Ovary (tissue), 10 donors: ENCODE measurements at regions of chr7 and their contacts with region 1.

Region 1: GRCh38 chr7:154927624-154928143 is 75.2 kb downstream of the PAXIP1 start:
- DNase-seq: peak; percentile 59 to 86 (median 69)
- H3K4me3 ChIP-seq: peak overlapping the region; percentile 66
- H3K27ac ChIP-seq: peak overlapping the region; percentile 79 to 84
- H3K4me1 ChIP-seq: peaks cover 2% of the 10 kb centered on the region
- H3K27me3 ChIP-seq: no peaks in the 10 kb centered on the region
- CTCF ChIP-seq: peak; percentile 44 to 78 (median 61)
- EP300 ChIP-seq: no peak
- POLR2A ChIP-seq: no peak

Region 2: DNA sequence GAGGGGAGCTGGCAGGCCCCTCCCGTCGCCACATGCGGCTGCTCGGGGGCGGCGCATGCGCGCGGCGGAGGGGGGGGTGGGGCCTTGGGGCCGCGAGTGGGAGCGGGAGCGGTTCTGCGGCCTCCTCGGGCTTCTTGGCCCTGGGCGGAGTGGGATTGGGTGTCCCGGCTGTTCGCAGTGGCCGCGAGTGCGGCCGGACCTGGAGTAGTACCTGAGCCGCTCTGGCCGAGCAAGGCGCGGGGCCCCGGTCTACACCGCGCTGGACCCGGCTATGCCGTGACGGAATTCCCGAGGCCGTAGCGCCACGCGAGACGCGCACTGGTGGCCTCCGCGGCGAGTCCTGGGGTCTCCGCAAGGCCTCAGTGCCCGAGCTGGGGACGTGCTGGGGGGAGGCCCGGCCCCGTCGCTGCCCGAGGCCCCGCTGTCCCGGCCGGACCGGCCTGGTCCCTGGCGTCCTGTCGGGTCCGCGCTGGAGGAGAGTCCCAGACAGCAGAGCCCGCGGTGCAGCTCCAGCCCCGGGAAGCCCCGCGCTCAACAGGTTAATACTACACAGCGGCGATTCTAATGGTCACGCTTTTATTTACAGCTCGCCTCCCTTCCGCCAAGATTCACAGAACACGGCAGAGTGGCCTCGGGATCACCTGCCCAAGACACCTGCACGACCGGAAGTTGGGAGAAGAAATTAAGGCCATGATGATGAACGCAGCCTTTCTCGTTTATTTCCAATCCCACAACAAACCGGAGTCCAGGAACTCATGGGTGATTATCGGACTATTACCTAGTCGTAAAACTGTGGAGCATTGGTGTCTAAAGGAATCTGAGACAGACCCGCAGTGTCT is 75.9 kb after region 1 on chr7:
- intact Hi-C with region 1: loop called in 2 of 4 experiments (anchors 5 to 10 kb)
- DNase-seq: peak in 4 of 5 donors; percentile 76 to 91 (median 84)
- H3K4me3 ChIP-seq: peak overlapping the region; percentile 56
- H3K27ac ChIP-seq: peak overlapping the region; percentile 90 to 95
- H3K4me1 ChIP-seq: peaks cover 10% of the 10 kb centered on the region
- H3K27me3 ChIP-seq: no peaks in the 10 kb centered on the region
- CTCF ChIP-seq: no peak
- EP300 ChIP-seq: no peak
- POLR2A ChIP-seq: peak; percentile 65

Region 3: DNA sequence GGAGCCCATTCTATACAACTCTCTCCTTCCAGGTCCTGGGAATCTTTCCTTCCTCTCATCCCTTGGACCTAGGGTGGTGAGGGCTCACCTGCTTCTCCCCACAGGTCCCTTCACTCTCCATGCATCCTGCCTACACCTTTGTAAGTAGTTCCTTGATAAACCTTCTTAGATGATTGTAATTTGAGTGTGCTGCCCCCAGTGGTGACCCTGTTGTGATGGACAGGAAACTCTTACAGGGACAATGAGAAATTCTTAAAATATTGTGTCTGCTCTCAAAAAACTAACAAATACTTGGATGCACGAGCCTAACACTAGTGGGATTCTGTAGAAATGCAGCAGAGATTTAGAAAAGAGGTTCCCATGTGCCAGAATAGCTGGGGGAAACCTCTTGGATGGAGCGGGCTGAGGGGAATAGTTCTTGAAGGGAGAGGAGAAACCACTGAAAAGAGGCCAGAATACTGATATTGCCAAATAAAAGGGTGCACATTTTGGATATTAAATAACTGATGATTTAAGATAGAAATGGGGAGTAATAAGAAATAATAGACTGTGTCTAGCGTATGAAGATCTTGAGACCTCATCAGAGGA is 82.0 kb after region 1 on chr7:
- intact Hi-C with region 1: loop called in 2 of 4 experiments (anchors 5 to 10 kb)
- DNase-seq: no peak
- H3K4me3 ChIP-seq: no peak overlapping the region
- H3K27ac ChIP-seq: no peak overlapping the region
- H3K4me1 ChIP-seq: no peaks in the 10 kb centered on the region
- H3K27me3 ChIP-seq: no peaks in the 10 kb centered on the region
- CTCF ChIP-seq: no peak
- EP300 ChIP-seq: no peak
- POLR2A ChIP-seq: no peak

Region 4: GRCh38 chr7:155344600-155345433 is 417.1 kb after region 1 on chr7:
- intact Hi-C with region 1: loop called (anchors 5 kb)
- DNase-seq: peak; percentile 64 to 88 (median 79)
- H3K4me3 ChIP-seq: peak overlapping the region; percentile 31
- H3K27ac ChIP-seq: no peak overlapping the region
- H3K4me1 ChIP-seq: no peaks in the 10 kb centered on the region
- H3K27me3 ChIP-seq: no peaks in the 10 kb centered on the region
- CTCF ChIP-seq: peak; percentile 80 to 93 (median 90)
- EP300 ChIP-seq: no peak
- POLR2A ChIP-seq: no peak

Region 5: DNA sequence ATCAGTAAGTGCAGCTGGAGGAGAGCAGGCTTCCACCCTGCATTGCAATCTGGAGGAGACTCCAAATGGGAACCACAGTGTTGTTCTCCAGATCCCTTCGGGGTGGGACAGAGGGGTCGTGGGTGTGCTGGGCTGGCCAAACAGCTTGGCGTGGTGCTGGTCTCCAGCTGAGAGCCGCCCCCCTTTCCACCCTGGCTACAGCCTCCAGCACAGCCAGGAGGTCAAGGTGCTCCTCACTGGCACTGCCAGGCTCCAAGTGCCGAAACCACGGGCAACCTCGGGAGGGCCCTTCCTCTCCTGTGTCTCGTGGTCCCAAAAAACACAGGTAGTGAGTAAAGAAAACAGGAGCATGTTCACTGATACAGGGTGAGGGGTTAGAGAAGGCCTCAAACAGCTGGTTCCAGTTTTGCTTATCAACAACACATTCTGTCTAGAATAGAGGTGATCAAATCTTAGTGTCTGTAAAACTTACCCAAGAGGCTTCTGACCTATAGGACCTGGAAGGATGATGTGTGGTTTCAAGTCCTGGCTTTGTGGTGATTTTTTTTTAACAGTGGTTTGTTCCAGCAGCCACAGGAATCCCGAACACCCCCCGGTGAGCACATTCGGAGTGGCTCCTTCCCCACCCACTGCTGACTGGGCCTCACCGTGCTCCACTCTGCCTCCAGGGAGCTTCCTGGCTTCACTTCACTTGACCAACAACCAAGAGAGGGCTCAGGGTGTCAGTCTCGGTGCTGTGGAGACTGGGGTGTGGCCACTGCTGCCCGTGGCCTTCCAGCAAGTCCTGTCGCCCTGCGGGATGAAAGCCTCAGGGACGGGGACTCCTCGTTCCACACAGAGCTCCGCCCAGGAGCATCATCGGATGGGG is 499.1 kb after region 1 on chr7:
- intact Hi-C with region 1: no loop called
- DNase-seq: no peak
- H3K4me3 ChIP-seq: no peak overlapping the region
- H3K27ac ChIP-seq: no peak overlapping the region
- H3K4me1 ChIP-seq: no peaks in the 10 kb centered on the region
- H3K27me3 ChIP-seq: no peaks in the 10 kb centered on the region
- CTCF ChIP-seq: no peak
- EP300 ChIP-seq: no peak
- POLR2A ChIP-seq: no peak